Activated CD4-positive, alpha-beta memory T cell treated with anti-CD3 and anti-CD28 coated beads for 36 hours (primary cell): ENCODE measurements at regions of chr5 and their contacts with region 1.

Region 1: DNA sequence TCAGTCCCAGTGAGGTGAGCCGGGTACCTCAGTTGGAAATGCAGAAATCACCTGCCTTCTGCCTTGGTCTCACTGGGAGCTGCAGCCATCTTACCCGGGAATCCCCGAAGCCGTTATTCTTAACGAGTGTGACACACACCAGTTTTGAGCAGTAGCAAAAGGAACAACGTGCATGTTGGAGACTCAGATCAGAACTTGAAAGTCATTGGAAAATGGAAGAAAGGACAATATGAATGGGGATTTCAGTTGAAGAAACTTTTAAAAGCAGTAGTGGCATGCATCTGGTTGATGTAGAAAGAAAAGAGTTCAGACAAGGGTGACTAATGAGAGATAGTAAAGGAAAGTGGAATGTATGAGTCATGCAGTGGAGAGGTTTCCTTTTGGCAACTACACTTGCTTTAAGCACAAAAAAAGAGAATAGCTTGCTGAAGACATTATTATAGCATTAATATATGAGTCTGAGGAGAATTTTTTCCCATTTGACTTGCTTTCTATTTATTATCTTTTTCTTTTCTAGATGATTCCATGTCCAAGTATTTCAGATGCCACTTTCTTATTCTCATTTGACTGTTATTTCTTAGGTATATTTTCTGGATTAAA is 44.4 kb upstream of the ANKDD1B start:
- DNase-seq: peak; percentile 78
- H3K4me3 Mint-ChIP-seq: peak overlapping the region; percentile 57
- H3K27ac Mint-ChIP-seq: peak overlapping the region; percentile 96
- H3K4me1 Mint-ChIP-seq: peaks cover 69% of the 10 kb centered on the region
- H3K27me3 Mint-ChIP-seq: no peaks in the 10 kb centered on the region

Region 2: DNA sequence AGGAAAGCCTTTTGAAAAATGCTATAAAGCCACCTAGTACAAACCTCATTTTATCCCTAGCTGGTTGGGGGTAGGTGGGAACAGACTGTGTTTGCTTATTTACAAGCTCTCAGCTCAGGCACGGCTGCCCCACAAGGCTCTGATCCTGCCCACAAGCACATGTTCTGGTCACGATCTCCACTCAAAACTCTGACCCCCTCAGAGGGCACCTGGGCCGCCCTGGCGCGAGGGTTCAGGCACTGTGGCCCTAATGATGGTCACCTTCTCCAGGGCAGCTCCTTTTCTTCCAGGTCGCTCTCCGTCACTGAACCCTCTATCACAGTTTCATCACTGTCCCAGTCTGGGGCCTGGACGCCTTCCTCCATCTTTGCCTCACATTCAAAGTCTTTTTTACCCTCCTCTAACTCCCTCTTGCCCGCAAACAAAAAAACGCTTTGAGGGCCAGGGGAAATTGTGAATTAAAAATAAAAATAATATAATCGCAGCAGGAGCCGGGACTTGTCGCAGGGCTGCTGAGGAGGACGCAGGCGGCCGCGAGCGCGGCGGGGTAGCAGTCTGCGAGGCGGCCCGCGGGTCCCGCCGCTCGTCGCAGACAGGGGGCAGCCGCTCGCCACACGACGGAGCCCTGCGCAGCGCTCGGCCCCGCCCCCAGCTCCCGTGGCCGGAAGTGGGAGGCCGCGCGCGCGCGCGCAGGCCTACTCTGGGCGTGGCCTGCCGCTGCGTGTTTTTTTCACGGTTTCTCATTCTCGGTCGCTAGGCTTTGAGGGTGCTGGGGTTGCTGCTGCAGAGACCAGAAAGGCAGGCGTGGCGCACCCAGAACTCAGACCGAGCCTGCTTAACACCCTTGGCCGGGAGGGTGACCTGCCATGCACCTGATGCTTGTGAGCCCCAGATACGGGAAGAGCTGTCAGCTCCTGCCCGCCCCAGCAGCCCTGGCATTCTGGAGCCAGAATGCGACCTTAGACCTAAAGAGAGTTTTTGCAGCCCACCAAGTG is 330.2 kb before region 1 on chr5 and contains the start of gene ANKRD31:
- CTCF ChIA-PET with region 1: no interaction called
- POLR2A ChIA-PET with region 1: no interaction called
- intact Hi-C with region 1: loop called (anchors 5 kb)
- DNase-seq: peak; percentile 90
- H3K4me3 Mint-ChIP-seq: peak within 1 kb of the TSS; percentile 96
- H3K27ac Mint-ChIP-seq: peak within 1 kb of the TSS; percentile 94
- H3K4me1 Mint-ChIP-seq: peaks cover 15% of the 10 kb centered on the region
- H3K27me3 Mint-ChIP-seq: no peaks in the 10 kb centered on the region
- total RNA-seq, gene ANKRD31: 0.29 to 0.33 TPM

Region 3: DNA sequence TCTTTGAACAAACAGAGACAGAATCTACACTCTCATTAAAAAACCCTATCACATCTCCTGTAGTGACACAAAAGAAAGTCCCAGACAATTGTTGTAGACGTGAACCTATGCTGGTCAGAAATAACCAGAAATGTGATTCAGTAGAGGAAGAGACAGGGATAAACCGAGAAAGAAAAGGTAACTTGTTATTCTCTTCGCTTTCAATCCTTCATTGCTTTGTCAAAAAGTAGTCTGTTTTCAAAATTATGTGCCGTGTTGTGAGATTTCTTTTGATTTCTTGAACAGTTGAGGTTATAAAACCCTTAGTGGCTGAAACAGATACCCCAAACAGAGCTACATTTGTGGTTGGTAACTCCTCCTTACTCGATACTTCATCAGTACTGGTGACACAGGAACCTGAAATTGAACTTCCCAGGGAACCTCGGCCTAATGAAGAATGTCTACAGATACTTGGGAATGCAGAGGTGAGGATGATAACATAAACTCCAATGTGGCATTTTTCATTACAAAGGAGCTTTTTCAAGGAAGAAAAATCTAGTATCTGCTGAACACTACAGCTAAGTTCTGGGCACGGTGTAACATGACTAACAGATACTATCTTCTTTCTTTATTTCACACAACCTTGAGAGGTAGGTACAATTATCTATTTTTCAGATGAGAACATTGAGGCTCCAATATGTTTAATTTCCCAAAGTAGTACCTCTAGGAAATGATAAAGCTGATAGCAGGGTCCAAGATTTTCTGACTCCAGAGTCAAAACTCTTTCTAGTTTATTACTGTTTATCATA is 215.5 kb before region 1 on chr5:
- CTCF ChIA-PET with region 1: interaction called, 3 read pairs
- POLR2A ChIA-PET with region 1: interaction called, 3 read pairs
- intact Hi-C with region 1: loop called (anchors 2 kb)
- DNase-seq: no peak
- H3K4me3 Mint-ChIP-seq: no peak overlapping the region
- H3K27ac Mint-ChIP-seq: peak overlapping the region; percentile 74
- H3K4me1 Mint-ChIP-seq: peaks cover 27% of the 10 kb centered on the region
- H3K27me3 Mint-ChIP-seq: no peaks in the 10 kb centered on the region

Region 4: GRCh38 chr5:75511435-75512384 is 55.1 kb before region 1 on chr5 and contains the starts of genes CERT1 and POLK:
- CTCF ChIA-PET with region 1: no interaction called
- POLR2A ChIA-PET with region 1: interaction called, 11 read pairs
- intact Hi-C with region 1: loop called (anchors 1 kb)
- DNase-seq: peak; percentile 99
- H3K4me3 Mint-ChIP-seq: peak within 1 kb of the TSS; percentile 98
- H3K27ac Mint-ChIP-seq: peak within 1 kb of the TSS; percentile 96
- H3K4me1 Mint-ChIP-seq: peaks cover 55% of the 10 kb centered on the region
- H3K27me3 Mint-ChIP-seq: no peaks in the 10 kb centered on the region
- total RNA-seq, gene CERT1: 32.3 to 34.4 TPM
- total RNA-seq, gene POLK: 33.9 to 36.5 TPM

Region 5: DNA sequence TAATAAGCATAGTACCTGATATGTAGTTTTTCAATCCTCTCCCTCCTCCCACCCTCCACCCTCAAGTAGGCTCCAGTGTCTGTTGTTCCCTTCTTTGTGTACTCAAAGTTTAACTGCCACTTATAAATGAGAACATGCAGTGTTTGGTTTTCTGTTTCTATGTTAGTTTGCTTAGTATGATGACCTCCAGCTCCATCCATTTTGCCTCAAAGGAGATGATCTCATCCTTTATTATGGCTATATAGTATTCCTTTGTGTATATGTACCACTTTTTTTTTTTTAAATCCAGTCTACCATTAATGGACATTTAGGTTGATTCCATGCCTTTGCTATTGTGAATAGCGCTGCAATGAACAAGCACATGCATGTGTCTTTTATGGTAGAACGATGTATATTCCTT is 34.6 kb before region 1 on chr5:
- CTCF ChIA-PET with region 1: no interaction called
- POLR2A ChIA-PET with region 1: no interaction called
- intact Hi-C with region 1: no loop called
- DNase-seq: no peak
- H3K4me3 Mint-ChIP-seq: no peak overlapping the region
- H3K27ac Mint-ChIP-seq: no peak overlapping the region
- H3K4me1 Mint-ChIP-seq: peaks cover 29% of the 10 kb centered on the region
- H3K27me3 Mint-ChIP-seq: no peaks in the 10 kb centered on the region

Region 6: GRCh38 chr5:75668977-75669689 is 102.3 kb after region 1 on chr5:
- CTCF ChIA-PET with region 1: interaction called, 9 read pairs
- POLR2A ChIA-PET with region 1: interaction called, 27 read pairs
- intact Hi-C with region 1: loop called (anchors 1 kb)
- DNase-seq: peak; percentile 87
- H3K4me3 Mint-ChIP-seq: peak overlapping the region; percentile 74
- H3K27ac Mint-ChIP-seq: peak overlapping the region; percentile 94
- H3K4me1 Mint-ChIP-seq: peaks cover 36% of the 10 kb centered on the region
- H3K27me3 Mint-ChIP-seq: no peaks in the 10 kb centered on the region

Region 7: GRCh38 chr5:76473661-76474060 is 906.9 kb after region 1 on chr5:
- CTCF ChIA-PET with region 1: no interaction called
- POLR2A ChIA-PET with region 1: no interaction called
- intact Hi-C with region 1: loop called (anchors 2 kb)
- DNase-seq: peak; percentile 87
- H3K4me3 Mint-ChIP-seq: peak overlapping the region; percentile 22
- H3K27ac Mint-ChIP-seq: peak overlapping the region; percentile 82
- H3K4me1 Mint-ChIP-seq: peaks cover 85% of the 10 kb centered on the region
- H3K27me3 Mint-ChIP-seq: no peaks in the 10 kb centered on the region